CD4-positive, alpha-beta T cell (primary cell): ENCODE measurements at regions of chr1 and their contacts with region 1.

Region 1: DNA sequence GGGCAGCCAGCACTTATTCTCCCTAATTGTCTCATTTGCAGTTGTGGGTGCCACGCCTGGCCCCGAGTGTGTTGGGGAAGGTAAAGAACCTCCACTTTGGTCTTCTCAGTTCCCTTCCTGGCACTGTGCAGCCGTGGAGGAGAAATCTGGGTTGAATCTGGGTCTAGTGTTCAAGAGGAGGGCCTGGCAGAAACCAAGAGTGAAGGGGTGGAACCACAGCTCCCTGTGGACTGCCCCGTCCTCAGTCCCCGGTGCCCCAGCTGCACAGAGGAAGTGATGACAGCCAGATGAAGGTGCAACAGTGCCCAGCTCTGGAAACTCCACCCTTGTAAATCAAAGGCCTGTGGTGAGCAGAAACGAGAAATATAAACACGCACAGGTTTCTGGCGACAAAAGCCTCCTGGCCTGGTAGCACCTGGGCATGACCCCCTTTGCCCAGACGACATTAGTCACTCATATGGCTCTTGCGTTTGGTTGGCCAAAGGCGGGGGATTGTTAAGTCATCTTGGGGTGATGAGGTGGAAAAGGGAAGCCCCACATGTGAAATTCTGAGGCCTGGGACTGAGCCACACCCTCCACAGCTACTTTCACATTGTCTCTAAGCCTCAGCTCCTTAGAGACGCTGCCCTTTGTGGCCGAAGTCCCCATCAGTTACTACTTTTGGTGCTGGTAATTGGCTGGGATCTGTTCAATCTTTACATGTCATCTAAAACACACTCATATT is 4.2 kb upstream of the ECE1 start:
- DNase-seq: peak; percentile 74 to 98 (median 84)
- ATAC-seq: peak; percentile 75
- H3K4me3 ChIP-seq: peak overlapping the region; percentile 61
- H3K4me3 Mint-ChIP-seq: peak overlapping the region; percentile 88
- H3K27ac ChIP-seq: peak overlapping the region; percentile 89 to 95
- H3K27ac Mint-ChIP-seq: peak overlapping the region; percentile 96
- H3K4me1 ChIP-seq: peaks cover 94% of the 10 kb centered on the region
- H3K4me1 Mint-ChIP-seq: peaks cover 80% of the 10 kb centered on the region
- H3K27me3 ChIP-seq: no peaks in the 10 kb centered on the region
- H3K27me3 Mint-ChIP-seq: no peaks in the 10 kb centered on the region
- CTCF ChIP-seq: no peak

Region 2: DNA sequence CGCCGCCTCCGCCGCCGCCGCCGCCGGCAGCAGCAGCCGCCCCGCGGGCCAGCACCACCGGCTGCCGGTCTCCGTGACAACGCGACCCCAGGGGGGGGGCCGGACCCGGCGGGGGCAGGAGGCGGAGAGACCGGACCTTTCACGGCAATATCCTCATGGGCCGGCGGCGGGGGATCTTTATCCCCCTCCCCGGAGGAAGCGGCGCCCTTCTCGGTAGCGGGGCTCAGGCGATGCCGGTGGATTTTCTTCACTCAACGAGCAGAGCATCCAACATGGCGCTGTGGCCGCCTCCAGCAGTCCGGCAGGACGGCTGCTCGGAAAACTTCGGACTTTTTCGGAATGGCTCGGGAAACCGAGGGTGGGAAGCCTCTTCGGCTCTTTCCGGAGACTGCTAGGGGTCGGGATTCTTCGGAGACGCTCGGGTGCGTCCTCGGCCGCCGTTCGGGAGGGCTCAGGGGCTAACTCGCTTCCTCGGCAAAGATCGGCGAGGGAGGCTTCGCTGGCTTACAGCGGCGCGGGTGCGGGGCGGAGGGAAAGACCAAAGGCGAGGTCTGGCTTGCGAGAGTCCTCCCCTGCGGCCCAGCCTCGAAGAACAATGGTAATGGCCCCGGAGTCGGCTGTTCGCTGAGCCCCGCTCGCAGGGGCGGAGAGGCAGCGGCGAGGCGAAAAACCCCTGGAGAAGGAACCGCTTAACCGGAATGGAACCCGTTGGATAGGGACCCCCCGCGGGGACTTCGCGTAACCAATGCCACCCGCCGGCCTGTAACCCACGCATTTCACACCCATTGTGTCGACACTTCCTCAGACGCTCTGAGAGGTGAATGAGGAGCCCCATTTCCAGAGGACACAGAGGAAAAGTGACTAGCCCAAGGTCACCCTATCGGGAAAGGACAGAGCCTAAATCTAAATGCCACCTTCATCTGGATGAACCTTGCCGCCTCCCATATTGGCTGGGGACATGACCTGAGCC is 117.6 kb before region 1 on chr1 and contains the start of gene EIF4G3:
- CTCF ChIA-PET with region 1: no interaction called
- POLR2A ChIA-PET with region 1: no interaction called
- intact Hi-C with region 1: no loop called
- DNase-seq: peak; percentile 98 to 100 (median 99)
- ATAC-seq: peak; percentile 94
- H3K4me3 ChIP-seq: peak within 1 kb of the TSS; percentile 88
- H3K4me3 Mint-ChIP-seq: peak within 1 kb of the TSS; percentile 89
- H3K27ac ChIP-seq: peak within 1 kb of the TSS; percentile 72 to 75
- H3K27ac Mint-ChIP-seq: peak within 1 kb of the TSS; percentile 85
- H3K4me1 ChIP-seq: peaks cover 17% of the 10 kb centered on the region
- H3K4me1 Mint-ChIP-seq: peaks cover 20% of the 10 kb centered on the region
- H3K27me3 ChIP-seq: no peaks in the 10 kb centered on the region
- H3K27me3 Mint-ChIP-seq: no peaks in the 10 kb centered on the region
- CTCF ChIP-seq: no peak
- total RNA-seq, gene EIF4G3: 18.8 to 21.5 TPM

Region 3: GRCh38 chr1:21255278-21255942 is 39.0 kb before region 1 on chr1:
- CTCF ChIA-PET with region 1: interaction called, 11 read pairs
- POLR2A ChIA-PET with region 1: interaction called, 40 read pairs
- intact Hi-C with region 1: loop called in 1 of 2 experiments (anchors 2 kb)
- DNase-seq: peak; percentile 78 to 90 (median 83)
- ATAC-seq: peak; percentile 87
- H3K4me3 ChIP-seq: no peak overlapping the region
- H3K4me3 Mint-ChIP-seq: no peak overlapping the region
- H3K27ac ChIP-seq: no peak overlapping the region
- H3K27ac Mint-ChIP-seq: peak overlapping the region; percentile 19
- H3K4me1 ChIP-seq: peaks cover 28% of the 10 kb centered on the region
- H3K4me1 Mint-ChIP-seq: peaks cover 25% of the 10 kb centered on the region
- H3K27me3 ChIP-seq: no peaks in the 10 kb centered on the region
- H3K27me3 Mint-ChIP-seq: no peaks in the 10 kb centered on the region
- CTCF ChIP-seq: peak; percentile 78

Region 4: DNA sequence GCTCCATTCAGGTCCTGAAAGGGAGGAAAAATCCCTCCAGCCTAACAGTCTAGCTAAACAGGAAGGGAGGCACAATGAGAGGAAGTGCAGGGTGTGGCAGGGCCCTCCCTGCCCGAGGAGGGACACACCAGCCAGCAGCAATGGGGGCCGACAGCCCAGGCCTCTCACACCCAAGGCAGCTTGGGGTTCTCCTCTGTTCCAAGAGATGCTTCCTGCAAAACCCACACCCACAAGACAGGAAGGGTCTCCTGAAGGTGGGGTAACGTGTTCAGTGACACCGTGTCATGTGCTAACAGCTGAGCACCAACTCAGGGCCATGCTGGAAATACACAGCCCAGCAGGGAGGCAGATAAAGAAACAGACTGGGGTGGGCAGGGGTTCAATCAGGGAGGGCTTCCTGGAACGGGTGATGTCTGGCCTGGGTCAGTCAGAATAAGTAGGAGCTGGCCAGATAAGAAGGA is 14.4 kb before region 1 on chr1:
- CTCF ChIA-PET with region 1: interaction called, 7 read pairs
- POLR2A ChIA-PET with region 1: interaction called, 83 read pairs
- intact Hi-C with region 1: no loop called
- DNase-seq: peak in 7 of 14 experiments; percentile 11 to 57 (median 46)
- ATAC-seq: peak; percentile 66
- H3K4me3 ChIP-seq: peak overlapping the region; percentile 23
- H3K4me3 Mint-ChIP-seq: peak overlapping the region; percentile 83
- H3K27ac ChIP-seq: peak overlapping the region; percentile 32 to 80
- H3K27ac Mint-ChIP-seq: peak overlapping the region; percentile 93
- H3K4me1 ChIP-seq: peaks cover 66% of the 10 kb centered on the region
- H3K4me1 Mint-ChIP-seq: peaks cover 54% of the 10 kb centered on the region
- H3K27me3 ChIP-seq: no peaks in the 10 kb centered on the region
- H3K27me3 Mint-ChIP-seq: no peaks in the 10 kb centered on the region
- CTCF ChIP-seq: no peak

Region 5: DNA sequence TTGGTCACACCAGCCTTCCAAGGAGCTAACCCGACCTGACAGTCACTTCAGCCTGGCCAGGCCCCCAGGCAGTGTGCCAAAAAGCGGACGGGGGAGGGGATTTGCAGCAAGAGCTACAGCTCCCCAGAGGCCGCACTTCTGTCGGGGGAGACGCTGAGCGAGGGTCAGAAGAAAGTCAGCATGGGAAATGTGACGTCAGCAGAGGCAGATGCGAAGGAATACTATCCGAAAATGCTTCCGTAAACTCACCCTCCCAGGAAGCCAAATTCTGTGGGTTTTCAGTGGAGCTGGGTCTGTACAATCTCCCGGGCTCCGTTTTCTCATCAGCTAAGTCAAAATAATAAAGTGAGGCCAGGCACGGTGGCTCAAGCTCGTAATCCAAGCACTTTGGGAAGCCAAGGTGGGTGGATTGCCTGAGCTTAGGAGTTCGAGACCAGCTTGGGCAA is 24.3 kb after region 1 on chr1:
- CTCF ChIA-PET with region 1: interaction called, 8 read pairs
- POLR2A ChIA-PET with region 1: interaction called, 205 read pairs
- intact Hi-C with region 1: no loop called
- DNase-seq: no peak
- ATAC-seq: no peak
- H3K4me3 ChIP-seq: no peak overlapping the region
- H3K4me3 Mint-ChIP-seq: no peak overlapping the region
- H3K27ac ChIP-seq: no peak overlapping the region
- H3K27ac Mint-ChIP-seq: no peak overlapping the region
- H3K4me1 ChIP-seq: peaks cover 46% of the 10 kb centered on the region
- H3K4me1 Mint-ChIP-seq: peaks cover 59% of the 10 kb centered on the region
- H3K27me3 ChIP-seq: no peaks in the 10 kb centered on the region
- H3K27me3 Mint-ChIP-seq: no peaks in the 10 kb centered on the region
- CTCF ChIP-seq: no peak

Region 6: GRCh38 chr1:21334214-21335087 is 40.0 kb after region 1 on chr1:
- CTCF ChIA-PET with region 1: interaction called, 8 read pairs
- POLR2A ChIA-PET with region 1: interaction called, 135 read pairs
- intact Hi-C with region 1: loop called (anchors 1 to 2 kb)
- DNase-seq: peak; percentile 60 to 96 (median 74)
- ATAC-seq: peak; percentile 80
- H3K4me3 ChIP-seq: peak overlapping the region; percentile 50
- H3K4me3 Mint-ChIP-seq: peak overlapping the region; percentile 92
- H3K27ac ChIP-seq: peak overlapping the region; percentile 81 to 89
- H3K27ac Mint-ChIP-seq: peak overlapping the region; percentile 98
- H3K4me1 ChIP-seq: peaks cover 97% of the 10 kb centered on the region
- H3K4me1 Mint-ChIP-seq: peaks cover 89% of the 10 kb centered on the region
- H3K27me3 ChIP-seq: no peaks in the 10 kb centered on the region
- H3K27me3 Mint-ChIP-seq: no peaks in the 10 kb centered on the region
- CTCF ChIP-seq: peak; percentile 66